ENCODE measurements at regions of chr1 and their contacts with region 1.

Region 1: DNA sequence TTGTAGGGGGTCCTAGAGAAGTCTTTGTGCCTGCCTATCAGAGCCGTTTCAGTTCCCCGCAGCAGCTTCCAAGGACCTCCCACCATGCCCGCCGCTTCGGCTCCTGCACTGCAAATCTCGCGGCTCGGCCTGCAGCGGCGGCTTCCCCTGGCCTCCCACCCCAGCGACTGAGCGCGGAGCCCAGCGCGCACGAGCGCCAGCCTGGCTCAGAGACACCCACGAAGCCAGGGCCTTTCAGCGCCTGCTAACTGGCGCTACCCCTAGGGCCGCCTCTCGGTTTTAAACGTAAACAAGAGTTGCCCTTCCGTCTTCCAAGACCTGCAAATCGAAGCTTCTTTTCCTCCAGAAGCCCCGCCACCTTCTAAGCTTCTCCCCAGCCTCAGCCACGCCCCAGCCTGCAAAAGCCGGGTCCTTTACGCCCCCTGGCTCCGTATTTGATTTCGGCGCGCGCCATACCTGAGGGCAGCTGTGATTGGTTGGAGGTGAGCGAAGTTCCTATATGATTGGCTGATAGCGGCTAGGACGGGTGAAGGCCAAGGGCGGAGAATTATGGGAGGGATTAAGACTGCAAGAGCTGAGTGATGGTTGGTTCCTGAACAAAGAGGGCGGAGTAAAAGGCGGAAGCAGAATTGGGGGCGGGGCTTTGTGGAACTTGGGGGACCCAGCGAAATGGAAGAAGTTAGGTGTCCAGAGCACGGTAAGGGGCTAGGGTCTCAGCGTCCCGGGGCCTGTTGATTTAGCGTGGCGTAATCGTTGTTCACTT is at the start of gene TTF2:
- DNase-seq: peak; percentile 82 to 99 (median 98)
- ATAC-seq: peak; percentile 96
- H3K4me3 ChIP-seq: peak within 1 kb of the TSS; percentile 81
- H3K4me3 Mint-ChIP-seq: no peak within 1 kb of the TSS
- H3K27ac ChIP-seq: peak within 1 kb of the TSS; percentile 82
- H3K27ac Mint-ChIP-seq: peak within 1 kb of the TSS in 4 of 9 donors; percentile 45 to 83 (median 62)
- H3K4me1 ChIP-seq: peaks cover 6 to 9% of the 10 kb centered on the region in 2 donors
- H3K4me1 Mint-ChIP-seq: peaks cover 19 to 60% (median 41%) of the 10 kb centered on the region in 7 donors
- H3K27me3 ChIP-seq: no peaks in the 10 kb centered on the region
- H3K27me3 Mint-ChIP-seq: no peaks in the 10 kb centered on the region
- total RNA-seq, gene TTF2: 27.6 to 74.4 (median 35.2) TPM

Region 2: GRCh38 chr1:116372587-116373444 is 687.0 kb before region 1 on chr1 and contains the start of gene ATP1A1:
- CTCF ChIA-PET with region 1: no interaction called
- POLR2A ChIA-PET with region 1: no interaction called
- intact Hi-C with region 1: loop called in 1 of 2 experiments (anchors 1 kb)
- DNase-seq: peak; percentile 94 to 99 (median 96)
- ATAC-seq: peak; percentile 89
- H3K4me3 ChIP-seq: peak within 1 kb of the TSS; percentile 94
- H3K4me3 Mint-ChIP-seq: peak within 1 kb of the TSS; percentile 91 to 99 (median 98)
- H3K27ac ChIP-seq: peak within 1 kb of the TSS; percentile 98
- H3K27ac Mint-ChIP-seq: peak within 1 kb of the TSS; percentile 89 to 98 (median 96)
- H3K4me1 ChIP-seq: peaks cover 18 to 20% of the 10 kb centered on the region in 2 donors
- H3K4me1 Mint-ChIP-seq: peaks cover 15 to 54% (median 35%) of the 10 kb centered on the region in 7 donors
- H3K27me3 ChIP-seq: no peaks in the 10 kb centered on the region
- H3K27me3 Mint-ChIP-seq: peaks cover 0 to 29% (median 0%) of the 10 kb centered on the region in 5 donors
- total RNA-seq, gene ATP1A1: 228 to 315 (median 287) TPM

Region 3: DNA sequence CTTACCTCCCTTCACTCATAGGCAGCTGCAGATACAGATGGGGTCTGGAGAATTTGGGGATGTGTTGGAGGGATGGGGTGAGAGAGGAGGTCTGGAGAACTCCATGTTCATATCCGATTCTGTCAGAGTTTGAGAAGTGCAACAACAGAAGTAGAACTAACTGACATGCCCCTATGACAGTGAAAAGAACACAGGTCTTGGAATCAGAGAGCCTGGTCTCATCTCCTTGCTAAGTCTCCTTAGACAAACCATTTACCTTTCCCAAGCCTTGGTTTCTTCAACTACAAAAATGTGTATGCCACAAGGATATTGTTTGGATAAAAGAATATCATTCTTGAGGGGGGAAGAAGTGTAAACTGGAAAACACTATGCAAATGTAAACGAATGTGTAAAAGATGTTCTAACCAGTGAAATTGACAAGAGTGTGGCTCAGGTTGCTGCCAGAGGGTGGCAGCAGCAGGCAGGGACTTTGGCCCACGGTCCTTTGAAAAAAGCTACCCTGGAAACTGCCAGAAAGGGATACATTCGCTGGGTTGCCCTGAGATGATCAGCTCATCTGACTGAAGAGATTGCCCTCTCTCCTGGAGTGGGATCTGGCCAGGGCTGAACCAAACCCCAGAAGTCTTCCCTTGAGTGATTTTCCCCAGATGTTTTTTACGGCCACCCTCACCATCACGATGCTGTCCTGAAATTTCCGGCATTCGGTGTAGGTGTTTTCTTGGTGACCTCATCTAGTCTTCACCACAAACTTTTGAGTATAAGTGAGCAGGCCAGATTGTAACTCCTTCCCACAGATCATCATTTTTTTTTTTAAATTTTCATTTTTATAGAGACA is 322.6 kb before region 1 on chr1:
- CTCF ChIA-PET with region 1: interaction called, 12 read pairs
- POLR2A ChIA-PET with region 1: interaction called, 16 read pairs
- intact Hi-C with region 1: loop called (anchors 1 kb)
- DNase-seq: peak; percentile 57 to 85 (median 80)
- ATAC-seq: peak; percentile 69
- H3K4me3 ChIP-seq: peak overlapping the region; percentile 28
- H3K4me3 Mint-ChIP-seq: peak overlapping the region; percentile 74 to 87 (median 82)
- H3K27ac ChIP-seq: peak overlapping the region; percentile 96
- H3K27ac Mint-ChIP-seq: peak overlapping the region; percentile 95 to 100 (median 98)
- H3K4me1 ChIP-seq: peaks cover 26 to 44% of the 10 kb centered on the region in 2 donors
- H3K4me1 Mint-ChIP-seq: peaks cover 39 to 54% (median 46%) of the 10 kb centered on the region in 7 donors
- H3K27me3 ChIP-seq: no peaks in the 10 kb centered on the region
- H3K27me3 Mint-ChIP-seq: no peaks in the 10 kb centered on the region

Region 4: GRCh38 chr1:116853670-116854402 is 206.0 kb before region 1 on chr1:
- CTCF ChIA-PET with region 1: interaction called, 9 read pairs
- POLR2A ChIA-PET with region 1: interaction called, 3 read pairs
- intact Hi-C with region 1: loop called (anchors 1 kb)
- DNase-seq: no peak
- ATAC-seq: peak; percentile 48
- H3K4me3 ChIP-seq: no peak overlapping the region
- H3K4me3 Mint-ChIP-seq: no peak overlapping the region
- H3K27ac ChIP-seq: no peak overlapping the region
- H3K27ac Mint-ChIP-seq: peak overlapping the region in 4 of 9 donors; percentile 43 to 87 (median 70)
- H3K4me1 ChIP-seq: peaks cover 0 to 5% of the 10 kb centered on the region in 2 donors
- H3K4me1 Mint-ChIP-seq: peaks cover 13 to 27% (median 17%) of the 10 kb centered on the region in 7 donors
- H3K27me3 ChIP-seq: no peaks in the 10 kb centered on the region
- H3K27me3 Mint-ChIP-seq: no peaks in the 10 kb centered on the region

Region 5: GRCh38 chr1:117001254-117001927 is 58.5 kb before region 1 on chr1 and contains the start of gene CD101:
- CTCF ChIA-PET with region 1: no interaction called
- POLR2A ChIA-PET with region 1: interaction called, 6 read pairs
- intact Hi-C with region 1: loop called in 1 of 2 experiments (anchors 1 kb)
- DNase-seq: peak in 4 of 9 donors; percentile 18 to 39 (median 32)
- ATAC-seq: peak; percentile 72
- H3K4me3 ChIP-seq: peak within 1 kb of the TSS; percentile 17
- H3K4me3 Mint-ChIP-seq: peak within 1 kb of the TSS; percentile 30 to 72 (median 60)
- H3K27ac ChIP-seq: peak within 1 kb of the TSS; percentile 60
- H3K27ac Mint-ChIP-seq: peak within 1 kb of the TSS; percentile 84 to 95 (median 87)
- H3K4me1 ChIP-seq: peaks cover 0 to 48% of the 10 kb centered on the region in 2 donors
- H3K4me1 Mint-ChIP-seq: peaks cover 36 to 72% (median 59%) of the 10 kb centered on the region in 7 donors
- H3K27me3 ChIP-seq: no peaks in the 10 kb centered on the region
- H3K27me3 Mint-ChIP-seq: no peaks in the 10 kb centered on the region
- total RNA-seq, gene CD101: 3.9 to 15.4 (median 10.3) TPM

Region 6: DNA sequence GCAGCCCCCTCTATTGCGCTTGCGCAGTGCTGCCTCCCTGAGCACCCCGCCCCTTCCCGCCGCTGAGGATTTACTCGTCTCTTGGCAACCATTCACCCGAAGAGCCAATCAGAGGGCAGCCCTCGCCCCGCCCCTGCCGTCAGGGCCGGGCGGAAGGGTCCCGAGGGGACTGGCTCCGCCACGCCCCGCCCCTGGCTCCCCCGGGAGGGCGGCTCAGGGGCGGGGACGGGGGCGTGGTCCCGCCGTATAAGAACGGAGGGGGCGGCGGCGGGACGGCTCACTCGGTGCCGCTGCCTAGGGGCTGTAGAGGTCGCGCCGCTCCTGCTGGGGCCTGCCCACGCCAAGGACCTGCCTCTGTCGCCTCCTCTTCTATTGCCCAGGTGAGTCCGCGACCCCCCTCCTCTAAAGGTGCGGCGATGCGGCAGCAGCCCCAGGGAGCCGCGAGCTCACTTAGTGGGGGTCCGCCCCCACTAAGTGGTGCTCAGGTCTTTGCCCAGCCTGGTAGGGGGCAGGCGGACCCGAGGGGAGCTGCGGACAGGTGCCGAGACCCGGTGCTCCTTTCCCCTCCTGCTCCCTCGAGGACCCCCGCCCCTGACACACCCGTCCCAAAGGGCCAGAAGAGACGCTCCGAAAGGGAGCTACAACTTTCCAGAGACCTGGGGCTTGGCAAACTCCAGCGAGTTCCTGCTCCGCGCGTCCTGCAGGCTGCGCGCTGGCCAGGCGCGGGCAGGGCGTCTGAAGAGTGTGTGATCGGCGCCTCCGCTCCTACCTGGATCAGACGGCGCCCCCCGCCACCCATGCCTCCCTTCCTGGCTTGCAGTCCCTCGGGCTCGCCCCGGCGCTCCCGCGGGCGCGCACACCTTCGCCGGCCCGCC is 546.2 kb after region 1 on chr1 and contains the start of gene TENT5C:
- CTCF ChIA-PET with region 1: no interaction called
- POLR2A ChIA-PET with region 1: no interaction called
- intact Hi-C with region 1: loop called in 1 of 2 experiments (anchors 1 kb)
- DNase-seq: peak; percentile 98 to 99 (median 99)
- ATAC-seq: peak; percentile 97
- H3K4me3 ChIP-seq: peak within 1 kb of the TSS; percentile 79
- H3K4me3 Mint-ChIP-seq: peak within 1 kb of the TSS; percentile 94 to 100 (median 98)
- H3K27ac ChIP-seq: peak within 1 kb of the TSS; percentile 86
- H3K27ac Mint-ChIP-seq: peak within 1 kb of the TSS; percentile 96 to 99 (median 97)
- H3K4me1 ChIP-seq: peaks cover 20 to 22% of the 10 kb centered on the region in 2 donors
- H3K4me1 Mint-ChIP-seq: peaks cover 25 to 44% (median 32%) of the 10 kb centered on the region in 7 donors
- H3K27me3 ChIP-seq: no peaks in the 10 kb centered on the region
- H3K27me3 Mint-ChIP-seq: peaks cover 0 to 42% (median 0%) of the 10 kb centered on the region in 5 donors
- total RNA-seq, gene TENT5C: 3.7 to 47.0 (median 12.9) TPM

Measured in naive thymus-derived CD4-positive, alpha-beta T cell (primary cell).